ENCODE measurements at regions of chr17 and their contacts with region 1.

Region 1: GRCh38 chr17:64634218-64634617 is 27.9 kb downstream of the SMURF2 start:
- DNase-seq: no peak
- H3K4me3 ChIP-seq: no peak overlapping the region
- H3K4me3 Mint-ChIP-seq: no peak overlapping the region
- H3K27ac Mint-ChIP-seq: no peak overlapping the region
- H3K4me1 ChIP-seq: peaks cover 4% of the 10 kb centered on the region; the same call in 1 of the 2 replicates
- H3K4me1 Mint-ChIP-seq: peaks cover 19% of the 10 kb centered on the region
- H3K27me3 ChIP-seq: no peaks in the 10 kb centered on the region
- H3K27me3 Mint-ChIP-seq: no peaks in the 10 kb centered on the region
- CTCF ChIP-seq: no peak

Region 2: GRCh38 chr17:64780096-64781013 is 146.1 kb after region 1 on chr17:
- CTCF ChIA-PET with region 1: no interaction called
- POLR2A ChIA-PET with region 1: interaction called, 30 read pairs
- intact Hi-C with region 1: no loop called
- DNase-seq: peak; percentile 83 to 87
- H3K4me3 ChIP-seq: peak overlapping the region; percentile 50
- H3K4me3 Mint-ChIP-seq: peak overlapping the region; percentile 74
- H3K27ac Mint-ChIP-seq: no peak overlapping the region
- H3K4me1 ChIP-seq: no peaks in the 10 kb centered on the region
- H3K4me1 Mint-ChIP-seq: peaks cover 7% of the 10 kb centered on the region
- H3K27me3 ChIP-seq: no peaks in the 10 kb centered on the region
- H3K27me3 Mint-ChIP-seq: no peaks in the 10 kb centered on the region
- CTCF ChIP-seq: no peak

Measured in Caco-2 (cell line).